Panc1 (cell line): ENCODE measurements at regions of chr6 and their contacts with region 1.

Region 1: DNA sequence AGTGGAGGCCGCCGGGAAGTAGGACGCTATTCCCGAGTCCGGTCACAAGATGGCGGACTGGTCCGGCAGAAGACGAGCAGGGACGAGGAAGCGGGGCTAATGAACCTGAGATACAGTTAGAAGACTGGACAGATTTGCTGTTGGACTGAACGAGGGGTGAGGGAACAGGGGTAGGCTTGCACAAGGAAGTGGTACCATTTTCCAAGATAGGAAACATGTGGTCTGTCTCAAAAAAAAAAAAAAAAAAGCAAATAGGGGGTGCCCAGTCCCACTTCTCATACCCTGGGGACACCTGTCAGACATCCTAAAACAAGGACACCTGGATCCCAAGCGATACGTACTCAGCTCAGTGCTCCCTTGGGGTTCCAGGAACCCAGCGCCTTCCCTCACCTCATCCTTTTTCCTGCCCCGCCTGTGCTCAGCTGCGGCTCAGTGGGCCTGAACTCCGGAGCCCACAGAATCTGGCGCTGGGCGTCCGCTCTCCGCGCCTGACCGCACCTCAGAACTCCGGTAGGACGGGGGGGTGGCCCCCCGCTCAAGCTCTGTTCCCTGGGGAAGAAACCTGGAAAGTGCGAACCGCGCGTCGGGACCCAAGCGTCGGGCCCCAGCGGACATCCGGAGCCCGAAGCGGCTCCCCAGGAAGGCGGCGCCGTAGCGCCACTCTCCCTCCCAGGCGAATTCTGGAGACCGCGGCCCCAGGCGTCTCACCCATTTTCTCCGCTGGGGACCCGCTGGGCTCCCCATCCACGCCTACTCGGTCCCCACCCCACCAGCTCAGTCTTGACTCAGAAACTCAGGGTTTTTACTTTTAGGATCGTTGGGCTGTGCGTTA is at the start of gene LY6G5C:
- DNase-seq: peak; percentile 30
- ATAC-seq: peak; percentile 92
- H3K4me3 ChIP-seq: no peak within 1 kb of the TSS; a peak in 1 of 4 replicates
- H3K27ac ChIP-seq: no peak within 1 kb of the TSS; the same call in 1 of the 2 replicates
- H3K4me1 ChIP-seq: peaks cover 4% of the 10 kb centered on the region; the same call in 1 of the 2 replicates
- H3K27me3 ChIP-seq: no peaks in the 10 kb centered on the region
- CTCF ChIP-seq: peak; percentile 86
- total RNA-seq, gene LY6G5C: 0.62 TPM

Region 2: DNA sequence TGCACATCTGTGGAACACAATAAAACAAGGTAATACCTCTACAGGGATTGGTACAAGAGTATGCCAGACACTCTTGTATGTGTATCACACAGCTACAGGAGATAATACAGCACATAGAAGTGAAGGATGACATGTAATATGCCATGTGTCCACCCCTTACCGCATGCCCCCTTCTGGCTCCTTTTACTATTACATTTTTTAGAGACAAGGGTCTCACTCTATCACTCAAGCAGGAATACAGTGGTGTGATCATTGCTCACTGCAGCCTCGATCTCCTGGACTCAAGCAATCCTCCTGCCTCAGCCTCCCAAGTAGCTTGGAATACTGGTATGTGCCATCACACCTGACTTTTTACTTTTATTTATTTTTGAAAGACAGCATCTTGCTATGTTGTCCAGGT is 84.0 kb before region 1 on chr6:
- CTCF ChIA-PET with region 1: no interaction called
- POLR2A ChIA-PET with region 1: no interaction called
- in situ Hi-C with region 1: no loop called
- intact Hi-C with region 1: no loop called
- DNase-seq: no peak
- ATAC-seq: peak; percentile 64
- H3K4me3 ChIP-seq: no peak overlapping the region
- H3K27ac ChIP-seq: no peak overlapping the region
- H3K4me1 ChIP-seq: 0 out of 2 replicates have a peak, but pooled peaks cover 2% of the 10 kb centered on the region
- H3K27me3 ChIP-seq: no peaks in the 10 kb centered on the region
- CTCF ChIP-seq: peak; percentile 74

Region 3: DNA sequence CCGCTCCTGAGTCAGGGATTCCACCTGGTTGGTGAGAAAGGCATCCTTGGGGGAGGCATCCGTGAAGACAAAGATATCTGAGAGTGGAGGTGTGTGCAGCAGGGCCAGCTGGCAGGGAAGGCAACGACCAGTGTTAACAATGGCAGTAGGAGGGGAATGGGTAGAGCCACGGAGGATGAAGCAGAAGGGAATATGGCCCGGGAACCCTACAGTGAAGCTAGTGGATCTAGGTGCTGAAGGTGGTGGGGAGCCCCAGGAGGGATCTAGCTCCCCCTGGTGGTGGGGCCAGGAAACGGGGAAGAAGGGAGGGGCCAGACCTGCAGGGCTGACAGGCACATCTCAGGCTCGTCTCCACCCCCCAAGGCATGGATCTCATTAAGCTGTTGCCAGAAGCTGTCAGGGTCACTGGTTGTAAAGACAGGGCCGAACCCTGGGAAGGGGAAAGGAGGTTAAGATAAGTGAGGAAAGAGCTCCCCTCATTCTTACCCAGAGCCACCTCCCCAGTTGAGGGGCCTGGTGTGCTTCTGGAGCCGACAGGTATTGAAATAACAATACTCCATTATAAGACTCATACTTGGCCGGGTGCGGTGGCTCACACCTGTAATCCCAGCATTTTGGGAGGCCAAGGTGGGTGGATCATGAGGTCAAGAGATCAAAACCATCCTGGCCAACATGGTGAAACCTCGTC is 88.8 kb after region 1 on chr6:
- CTCF ChIA-PET with region 1: no interaction called
- POLR2A ChIA-PET with region 1: no interaction called
- in situ Hi-C with region 1: no loop called
- intact Hi-C with region 1: loop called (anchors 5 kb)
- DNase-seq: no peak
- ATAC-seq: peak; percentile 82
- H3K4me3 ChIP-seq: no peak overlapping the region
- H3K27ac ChIP-seq: no peak overlapping the region
- H3K4me1 ChIP-seq: no peaks in the 10 kb centered on the region
- H3K27me3 ChIP-seq: no peaks in the 10 kb centered on the region
- CTCF ChIP-seq: peak; percentile 94

Region 4: GRCh38 chr6:31834434-31835198 is 153.6 kb after region 1 on chr6:
- CTCF ChIA-PET with region 1: no interaction called
- POLR2A ChIA-PET with region 1: no interaction called
- in situ Hi-C with region 1: no loop called
- intact Hi-C with region 1: loop called (anchors 5 kb)
- DNase-seq: no peak
- ATAC-seq: peak; percentile 89
- H3K4me3 ChIP-seq: peak overlapping the region; percentile 77 to 95
- H3K27ac ChIP-seq: peak overlapping the region; percentile 95
- H3K4me1 ChIP-seq: peaks cover 30% of the 10 kb centered on the region
- H3K27me3 ChIP-seq: no peaks in the 10 kb centered on the region
- CTCF ChIP-seq: no peak